ENCODE measurements at regions of chr17 and their contacts with region 1.

Region 1: DNA sequence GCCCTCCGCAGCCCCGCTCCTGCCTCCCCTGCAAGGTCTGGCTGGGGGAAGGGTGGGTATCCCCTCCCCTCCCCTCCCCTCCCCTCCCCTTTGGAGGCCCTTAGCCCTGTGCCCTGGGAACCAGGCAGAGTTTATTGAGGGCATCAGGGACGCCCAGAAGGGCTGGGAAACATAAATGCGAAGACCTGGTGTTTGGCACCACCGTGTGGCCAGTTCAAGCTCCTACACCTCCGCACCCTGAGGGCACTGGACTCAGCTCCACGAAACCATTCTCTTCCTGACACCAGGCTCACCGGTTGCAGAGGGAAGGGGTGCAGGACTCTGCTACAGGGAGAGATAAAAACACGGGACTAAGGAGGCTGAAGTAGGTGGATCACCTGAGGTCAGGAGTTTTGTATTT is 1.0 kb upstream of the AIPL1 start:
- DNase-seq: peak; percentile 70
- ATAC-seq: peak; percentile 98
- H3K4me3 Mint-ChIP-seq: no peak overlapping the region
- H3K27ac Mint-ChIP-seq: no peak overlapping the region
- H3K4me1 Mint-ChIP-seq: no peaks in the 10 kb centered on the region
- H3K27me3 Mint-ChIP-seq: peaks cover 15% of the 10 kb centered on the region
- CTCF ChIP-seq: peak; percentile 77

Region 2: DNA sequence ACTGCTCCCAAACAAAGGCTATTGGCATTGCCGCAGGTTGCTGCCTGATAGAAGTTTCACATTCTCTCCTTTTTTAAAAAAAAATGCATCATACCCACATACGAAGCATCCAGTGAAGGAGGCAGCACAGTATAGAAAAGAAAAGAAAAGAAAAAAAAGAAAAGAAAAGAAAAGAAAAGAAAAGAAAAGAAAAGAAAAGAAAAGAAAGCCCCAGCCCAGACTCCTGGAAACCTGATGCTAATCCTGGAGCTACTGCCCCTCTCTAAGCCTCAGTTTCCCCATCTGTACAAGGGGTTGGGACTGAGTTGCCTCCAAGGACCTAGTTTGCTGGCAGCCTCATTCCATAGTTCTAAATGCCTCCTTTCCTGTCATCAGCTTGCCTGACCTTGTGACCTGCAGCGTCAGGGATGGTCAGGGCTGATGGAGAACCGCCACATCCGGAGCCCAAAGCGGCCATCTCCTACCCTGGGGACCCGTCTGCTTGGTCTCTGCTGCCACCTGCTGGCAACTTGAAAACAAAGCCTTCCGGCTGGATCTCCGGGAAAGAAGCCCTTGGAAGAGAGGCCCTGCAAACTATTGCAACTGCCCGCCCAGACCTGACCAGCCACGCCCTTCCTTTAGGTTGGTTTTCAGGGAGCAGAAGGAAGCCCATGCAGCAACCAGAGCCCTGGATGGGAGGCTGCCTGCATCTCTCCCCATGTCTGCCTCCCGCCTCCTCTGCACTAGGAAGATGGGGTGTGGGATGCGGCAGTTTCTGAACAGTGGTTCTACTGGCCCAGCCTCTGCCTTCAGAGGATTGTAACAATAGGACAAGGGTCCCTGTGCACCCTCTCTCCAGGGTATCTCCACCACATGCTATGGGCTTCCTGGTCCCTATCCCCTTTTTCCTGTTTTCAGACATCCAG is 14.0 kb before region 1 on chr17:
- CTCF ChIA-PET with region 1: interaction called, 21 read pairs
- POLR2A ChIA-PET with region 1: no interaction called
- intact Hi-C with region 1: no loop called
- DNase-seq: peak; percentile 81
- ATAC-seq: peak; percentile 73
- H3K4me3 Mint-ChIP-seq: no peak overlapping the region
- H3K27ac Mint-ChIP-seq: no peak overlapping the region
- H3K4me1 Mint-ChIP-seq: no peaks in the 10 kb centered on the region
- H3K27me3 Mint-ChIP-seq: peaks cover 8% of the 10 kb centered on the region
- CTCF ChIP-seq: peak; percentile 85